Mammary epithelial cell (primary cell): ENCODE measurements at regions of chr9 and their contacts with region 1.

Region 1: GRCh38 chr9:129048041-129048440 is 11.6 kb downstream of the MIGA2 start:
- DNase-seq: no peak
- H3K4me3 ChIP-seq: no peak overlapping the region
- H3K27ac ChIP-seq: no peak overlapping the region
- H3K4me1 ChIP-seq: peaks cover 4% of the 10 kb centered on the region
- H3K27me3 ChIP-seq: no peaks in the 10 kb centered on the region
- CTCF ChIP-seq: no peak

Region 2: DNA sequence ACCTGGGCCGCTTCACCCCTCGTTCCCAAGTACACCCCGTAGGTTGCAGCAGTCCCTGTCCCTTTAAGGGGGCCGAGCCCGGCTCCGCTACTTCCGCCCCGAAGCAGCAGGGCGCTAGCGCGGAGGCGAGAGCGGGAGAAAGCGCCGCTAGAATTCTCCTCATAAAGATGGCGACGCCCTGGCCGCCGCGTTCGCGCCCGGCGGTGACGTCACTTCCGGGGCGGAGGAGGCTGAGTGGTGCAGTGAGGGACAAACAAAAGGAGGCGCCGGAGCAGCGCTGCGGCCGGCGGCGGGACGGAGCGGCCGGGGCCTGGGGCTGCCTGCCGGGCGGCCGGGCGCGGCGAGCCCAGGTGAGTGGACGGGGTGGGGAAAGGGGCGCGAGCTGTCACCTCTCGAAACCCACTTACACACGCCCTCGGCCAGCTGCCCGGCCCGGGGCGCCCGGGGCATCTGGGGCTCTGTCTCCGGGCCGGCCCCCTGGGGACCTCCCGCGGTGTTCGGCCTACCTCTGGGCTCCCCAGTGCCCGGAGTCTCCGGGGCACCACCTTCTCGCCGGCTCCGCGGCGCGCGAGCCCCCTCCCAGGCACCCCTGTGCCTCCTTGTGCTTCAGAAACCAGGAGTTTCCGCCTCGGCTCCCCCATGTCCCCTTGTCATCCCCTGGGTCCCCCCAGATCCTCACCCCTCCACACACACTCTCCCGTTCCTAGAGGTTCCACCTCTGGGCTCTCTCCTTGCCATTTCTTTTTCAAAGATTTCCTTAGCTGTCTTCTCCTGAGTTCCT is 165.9 kb before region 1 on chr9 and contains the starts of genes KYAT1 and LRRC8A:
- CTCF ChIA-PET with region 1: no interaction called
- dilution Hi-C with region 1: no loop called
- in situ Hi-C with region 1: no loop called
- intact Hi-C with region 1: no loop called
- DNase-seq: peak; percentile 96
- H3K4me3 ChIP-seq: peak within 1 kb of the TSS; percentile 85 to 88 (median 87)
- H3K27ac ChIP-seq: peak within 1 kb of the TSS; percentile 76
- H3K4me1 ChIP-seq: peaks cover 49% of the 10 kb centered on the region
- H3K27me3 ChIP-seq: no peaks in the 10 kb centered on the region
- CTCF ChIP-seq: no peak
- total RNA-seq, gene KYAT1: 10.2 to 11.5 TPM
- total RNA-seq, gene LRRC8A: 155 to 206 TPM

Region 3: DNA sequence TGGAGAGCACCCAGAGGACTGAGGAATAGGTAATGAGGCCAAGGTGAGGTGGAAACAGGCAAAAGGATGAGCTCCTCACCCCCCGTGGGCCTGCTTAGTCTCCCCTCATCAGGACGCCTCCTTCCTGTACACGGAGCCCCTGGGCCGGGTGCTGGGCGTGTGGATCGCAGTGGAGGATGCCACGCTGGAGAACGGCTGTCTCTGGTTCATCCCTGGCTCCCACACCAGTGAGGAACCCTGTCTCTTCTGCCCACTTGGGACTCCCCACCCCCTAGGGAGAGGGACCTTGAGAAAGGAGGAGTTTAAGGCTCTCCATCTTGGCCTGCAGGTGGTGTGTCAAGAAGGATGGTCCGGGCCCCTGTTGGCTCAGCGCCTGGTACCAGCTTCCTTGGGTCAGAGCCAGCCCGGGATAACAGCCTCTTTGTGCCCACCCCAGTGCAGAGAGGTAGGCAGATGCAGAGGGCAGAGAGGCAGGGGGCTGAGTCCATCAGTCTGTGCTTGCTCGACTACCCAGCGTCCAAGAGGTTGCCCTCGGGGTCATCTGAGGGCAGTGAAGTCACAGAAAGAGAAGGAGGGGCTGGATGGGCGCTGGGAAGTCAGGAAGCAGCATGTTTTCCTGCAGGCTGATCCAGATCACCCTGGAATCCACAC is 107.6 kb before region 1 on chr9:
- CTCF ChIA-PET with region 1: no interaction called
- dilution Hi-C with region 1: loop called (anchors 5 kb)
- in situ Hi-C with region 1: no loop called
- intact Hi-C with region 1: no loop called
- DNase-seq: no peak
- H3K4me3 ChIP-seq: no peak overlapping the region
- H3K27ac ChIP-seq: no peak overlapping the region
- H3K4me1 ChIP-seq: peaks cover 10% of the 10 kb centered on the region
- H3K27me3 ChIP-seq: no peaks in the 10 kb centered on the region
- CTCF ChIP-seq: no peak

Region 4: GRCh38 chr9:128972956-128973355 is 75.1 kb before region 1 on chr9:
- CTCF ChIA-PET with region 1: no interaction called
- dilution Hi-C with region 1: loop called (anchors 5 kb)
- in situ Hi-C with region 1: no loop called
- intact Hi-C with region 1: no loop called
- DNase-seq: peak; percentile 51
- H3K4me3 ChIP-seq: no peak overlapping the region
- H3K27ac ChIP-seq: no peak overlapping the region
- H3K4me1 ChIP-seq: no peaks in the 10 kb centered on the region
- H3K27me3 ChIP-seq: no peaks in the 10 kb centered on the region
- CTCF ChIP-seq: no peak

Region 5: GRCh38 chr9:129422843-129423192 is 374.8 kb after region 1 on chr9:
- CTCF ChIA-PET with region 1: no interaction called
- dilution Hi-C with region 1: no loop called
- in situ Hi-C with region 1: no loop called
- intact Hi-C with region 1: no loop called
- DNase-seq: no peak
- H3K4me3 ChIP-seq: no peak overlapping the region
- H3K27ac ChIP-seq: no peak overlapping the region
- H3K4me1 ChIP-seq: no peaks in the 10 kb centered on the region
- H3K27me3 ChIP-seq: no peaks in the 10 kb centered on the region
- CTCF ChIP-seq: no peak